MCF 10A (cell line): ENCODE measurements at regions of chr6 and their contacts with region 1.

Region 1: DNA sequence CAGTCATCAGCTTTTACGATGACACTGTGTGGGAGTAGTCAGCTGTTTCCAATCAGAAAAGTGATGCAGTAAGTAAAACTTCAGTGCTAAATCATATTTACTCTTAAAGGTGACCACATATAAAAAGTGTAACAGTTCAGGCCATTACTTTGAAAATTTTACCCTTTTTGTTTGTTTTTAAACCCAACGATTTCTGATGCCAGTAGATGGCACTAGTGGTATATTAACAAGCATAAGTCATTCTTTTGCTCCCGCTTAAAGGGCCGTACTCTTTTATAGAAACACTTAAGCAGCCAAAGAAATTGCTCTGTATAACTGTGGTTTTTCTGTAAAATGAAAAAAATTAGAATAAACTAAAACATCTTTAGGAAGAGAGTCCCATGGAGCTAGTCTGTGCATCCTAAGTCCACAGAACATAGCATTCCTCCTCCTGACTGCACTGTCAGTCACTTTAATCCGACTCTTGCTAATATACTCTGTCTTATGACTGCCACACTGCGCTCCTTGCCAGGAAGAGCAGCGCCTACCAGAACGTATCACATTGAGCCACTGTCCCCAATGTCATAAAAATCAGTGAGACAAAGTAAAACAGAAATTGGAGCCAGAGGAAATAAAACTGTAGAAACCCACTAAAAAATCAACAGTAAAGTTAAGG is 25.0 kb downstream of the HEBP2 start:
- DNase-seq: peak; percentile 61
- H3K4me3 Mint-ChIP-seq: no peak overlapping the region
- H3K27ac Mint-ChIP-seq: no peak overlapping the region
- H3K4me1 Mint-ChIP-seq: no peaks in the 10 kb centered on the region
- H3K27me3 Mint-ChIP-seq: no peaks in the 10 kb centered on the region
- CTCF ChIP-seq: peak; percentile 55

Region 2: GRCh38 chr6:138440758-138441357 is 11.8 kb after region 1 on chr6:
- CTCF ChIA-PET with region 1: interaction called, 15 read pairs
- POLR2A ChIA-PET with region 1: interaction called, 3 read pairs
- intact Hi-C with region 1: no loop called
- DNase-seq: no peak
- H3K4me3 Mint-ChIP-seq: no peak overlapping the region
- H3K27ac Mint-ChIP-seq: no peak overlapping the region
- H3K4me1 Mint-ChIP-seq: peaks cover 7% of the 10 kb centered on the region
- H3K27me3 Mint-ChIP-seq: no peaks in the 10 kb centered on the region
- CTCF ChIP-seq: no peak

Region 3: GRCh38 chr6:138455746-138456400 is 26.8 kb after region 1 on chr6:
- CTCF ChIA-PET with region 1: interaction called, 15 read pairs
- POLR2A ChIA-PET with region 1: no interaction called
- intact Hi-C with region 1: no loop called
- DNase-seq: peak; percentile 94
- H3K4me3 Mint-ChIP-seq: peak overlapping the region; percentile 68
- H3K27ac Mint-ChIP-seq: peak overlapping the region; percentile 82
- H3K4me1 Mint-ChIP-seq: peaks cover 10% of the 10 kb centered on the region
- H3K27me3 Mint-ChIP-seq: no peaks in the 10 kb centered on the region
- CTCF ChIP-seq: no peak

Region 4: DNA sequence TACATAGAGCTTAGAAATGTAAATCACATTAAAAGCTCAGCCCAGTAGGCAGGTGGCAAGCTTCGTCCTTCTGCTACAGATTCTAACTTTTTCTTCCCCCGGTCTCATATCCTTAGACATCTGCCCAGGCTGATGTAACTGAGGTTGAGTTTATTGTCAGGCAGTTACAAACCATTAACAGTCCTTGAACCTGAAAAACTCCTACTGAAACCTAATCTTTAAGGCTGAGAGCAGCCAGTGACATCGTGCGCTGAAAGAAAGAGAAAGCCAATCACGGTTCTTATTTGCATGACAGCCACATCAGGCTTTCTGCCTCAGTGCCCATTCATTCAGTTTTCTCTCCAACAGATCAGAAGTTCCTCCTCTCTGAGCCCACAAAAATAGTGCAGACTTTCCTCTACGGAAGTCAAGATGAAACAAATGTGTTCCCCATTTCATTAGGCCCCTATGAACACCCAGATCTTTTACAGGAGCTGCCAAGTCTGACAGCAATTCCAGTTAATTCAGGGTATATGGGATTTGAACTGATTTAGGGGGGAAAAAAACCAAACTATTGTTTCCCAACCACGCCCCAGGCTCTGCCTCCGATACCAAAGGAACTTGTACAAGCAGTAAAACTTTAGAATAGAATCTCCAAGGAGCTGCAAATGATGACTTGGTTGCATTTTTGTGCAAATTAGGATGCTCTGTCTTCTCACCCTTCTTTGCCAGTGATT is 70.4 kb after region 1 on chr6 and contains the start of gene NHSL1:
- CTCF ChIA-PET with region 1: interaction called, 213 read pairs
- POLR2A ChIA-PET with region 1: interaction called, 4 read pairs
- intact Hi-C with region 1: no loop called
- DNase-seq: no peak
- H3K4me3 Mint-ChIP-seq: no peak within 1 kb of the TSS
- H3K27ac Mint-ChIP-seq: peak within 1 kb of the TSS; percentile 6
- H3K4me1 Mint-ChIP-seq: peaks cover 8% of the 10 kb centered on the region
- H3K27me3 Mint-ChIP-seq: no peaks in the 10 kb centered on the region
- CTCF ChIP-seq: no peak
- total RNA-seq, gene NHSL1: 23.9 and 32.1 TPM in 2 replicates

Region 5: DNA sequence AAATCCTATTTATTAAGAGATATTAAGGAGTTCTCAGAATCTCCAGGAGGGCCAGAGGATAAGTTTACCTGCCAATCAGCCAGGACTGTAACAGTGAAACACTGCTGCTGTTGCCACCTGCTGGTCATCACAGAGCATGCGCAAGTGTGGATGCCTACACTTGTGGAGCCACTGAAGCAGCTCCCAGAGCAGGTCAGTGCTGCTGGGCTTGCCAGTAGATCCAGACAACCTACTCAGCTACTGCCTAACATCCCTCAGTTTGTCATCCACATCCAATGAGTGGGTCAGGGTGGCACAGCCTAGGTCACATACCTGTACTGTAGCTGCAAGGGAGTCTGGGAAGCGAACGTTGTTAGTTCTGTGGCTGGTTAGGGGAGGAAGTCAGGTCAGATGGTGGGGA is 88.6 kb after region 1 on chr6:
- CTCF ChIA-PET with region 1: interaction called, 213 read pairs
- POLR2A ChIA-PET with region 1: interaction called, 7 read pairs
- intact Hi-C with region 1: loop called (anchors 1 kb)
- DNase-seq: peak; percentile 54
- H3K4me3 Mint-ChIP-seq: no peak overlapping the region
- H3K27ac Mint-ChIP-seq: no peak overlapping the region
- H3K4me1 Mint-ChIP-seq: peaks cover 10% of the 10 kb centered on the region
- H3K27me3 Mint-ChIP-seq: no peaks in the 10 kb centered on the region
- CTCF ChIP-seq: peak; percentile 56

Region 6: GRCh38 chr6:138765896-138766655 is 337.0 kb after region 1 on chr6:
- CTCF ChIA-PET with region 1: interaction called, 29 read pairs
- POLR2A ChIA-PET with region 1: no interaction called
- intact Hi-C with region 1: loop called (anchors 1 kb)
- DNase-seq: peak; percentile 47
- H3K4me3 Mint-ChIP-seq: no peak overlapping the region
- H3K27ac Mint-ChIP-seq: no peak overlapping the region
- H3K4me1 Mint-ChIP-seq: no peaks in the 10 kb centered on the region
- H3K27me3 Mint-ChIP-seq: no peaks in the 10 kb centered on the region
- CTCF ChIP-seq: peak; percentile 43